ENCODE measurements at regions of chr5 and their contacts with region 1.

Region 1: GRCh38 chr5:152193367-152194107 is 211.5 kb downstream of the NMUR2 start:
- DNase-seq: no peak

Region 2: DNA sequence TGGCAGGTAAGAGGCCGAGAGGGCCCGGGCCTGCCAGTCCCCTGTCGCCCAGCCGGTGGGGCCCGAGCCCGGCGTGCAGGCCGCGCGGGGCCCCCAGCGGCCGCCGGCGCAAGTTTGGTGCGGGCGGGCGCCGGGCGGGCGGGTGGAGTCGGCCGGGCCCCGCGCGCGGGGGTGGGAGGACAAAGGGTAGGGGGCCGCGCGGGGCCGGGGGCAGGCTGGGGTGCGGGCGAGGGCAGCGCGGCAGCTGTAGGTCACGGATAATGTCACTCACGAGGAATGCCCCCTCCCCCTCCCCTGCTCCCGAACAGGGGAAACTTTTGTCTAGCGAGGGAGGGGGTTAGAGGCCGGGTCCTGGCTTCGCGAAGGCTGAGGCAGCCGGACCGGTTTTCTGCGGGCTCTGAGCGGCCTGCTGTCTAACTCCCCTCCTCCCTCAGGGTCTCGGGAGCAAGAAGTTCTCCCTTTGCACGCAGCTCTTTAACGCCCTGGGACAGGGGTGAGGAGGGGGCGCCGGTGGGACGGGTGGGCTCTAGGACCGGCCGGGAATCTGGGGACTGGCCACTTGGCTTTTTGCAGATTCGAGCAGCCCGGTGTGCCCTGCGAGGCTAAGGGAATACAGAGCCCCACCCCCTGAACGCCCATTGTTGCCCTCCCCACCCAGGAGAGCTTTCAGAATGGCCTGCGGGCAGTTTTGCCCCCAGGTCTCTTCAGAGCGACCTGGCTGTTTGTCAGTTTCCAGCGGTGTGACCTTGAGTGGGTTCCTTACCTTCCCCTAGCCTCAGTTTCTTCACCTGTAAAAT is 1706.9 kb before region 1 on chr5:
- intact Hi-C with region 1: no loop called
- DNase-seq: peak; percentile 82

Region 3: GRCh38 chr5:150615141-150615699 is 1578.3 kb before region 1 on chr5:
- intact Hi-C with region 1: no loop called
- DNase-seq: no peak

Region 4: DNA sequence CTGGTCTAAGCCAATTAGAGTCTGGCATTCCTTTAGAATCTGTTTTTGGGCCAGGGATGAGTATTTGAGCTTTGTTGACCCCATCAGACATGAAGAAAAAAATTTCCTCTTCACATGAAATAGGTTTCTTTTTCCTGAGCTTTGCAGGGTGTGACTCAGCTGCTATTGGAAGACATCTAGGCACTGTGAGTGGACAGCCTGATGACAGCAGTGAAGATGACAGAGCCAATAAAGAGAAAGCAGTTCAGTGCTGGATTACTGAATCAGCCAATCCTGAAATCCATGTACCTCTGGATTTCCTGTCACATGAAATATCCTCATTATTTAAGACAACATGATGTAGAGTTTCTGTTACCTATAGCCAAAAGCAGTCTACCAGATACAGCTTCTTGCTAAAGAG is 1245.6 kb after region 1 on chr5:
- intact Hi-C with region 1: loop called in 1 of 2 experiments (anchors 5 kb)
- DNase-seq: no peak

Measured in posterior vena cava (tissue), 2 donors.